Esophagus squamous epithelium (tissue), 5 donors: ENCODE measurements at regions of chr14 and their contacts with region 1.

Region 1: GRCh38 chr14:69460093-69460701 is 24.3 kb upstream of the PLEKHD1 start:
- DNase-seq: no peak
- H3K4me3 ChIP-seq: no peak overlapping the region
- H3K27ac ChIP-seq: no peak overlapping the region
- H3K4me1 ChIP-seq: peaks cover 0 to 5% (median 0%) of the 10 kb centered on the region in 3 donors
- H3K27me3 ChIP-seq: no peaks in the 10 kb centered on the region
- CTCF ChIP-seq: peak; percentile 57 to 89 (median 79)
- POLR2A ChIP-seq: no peak

Region 2: DNA sequence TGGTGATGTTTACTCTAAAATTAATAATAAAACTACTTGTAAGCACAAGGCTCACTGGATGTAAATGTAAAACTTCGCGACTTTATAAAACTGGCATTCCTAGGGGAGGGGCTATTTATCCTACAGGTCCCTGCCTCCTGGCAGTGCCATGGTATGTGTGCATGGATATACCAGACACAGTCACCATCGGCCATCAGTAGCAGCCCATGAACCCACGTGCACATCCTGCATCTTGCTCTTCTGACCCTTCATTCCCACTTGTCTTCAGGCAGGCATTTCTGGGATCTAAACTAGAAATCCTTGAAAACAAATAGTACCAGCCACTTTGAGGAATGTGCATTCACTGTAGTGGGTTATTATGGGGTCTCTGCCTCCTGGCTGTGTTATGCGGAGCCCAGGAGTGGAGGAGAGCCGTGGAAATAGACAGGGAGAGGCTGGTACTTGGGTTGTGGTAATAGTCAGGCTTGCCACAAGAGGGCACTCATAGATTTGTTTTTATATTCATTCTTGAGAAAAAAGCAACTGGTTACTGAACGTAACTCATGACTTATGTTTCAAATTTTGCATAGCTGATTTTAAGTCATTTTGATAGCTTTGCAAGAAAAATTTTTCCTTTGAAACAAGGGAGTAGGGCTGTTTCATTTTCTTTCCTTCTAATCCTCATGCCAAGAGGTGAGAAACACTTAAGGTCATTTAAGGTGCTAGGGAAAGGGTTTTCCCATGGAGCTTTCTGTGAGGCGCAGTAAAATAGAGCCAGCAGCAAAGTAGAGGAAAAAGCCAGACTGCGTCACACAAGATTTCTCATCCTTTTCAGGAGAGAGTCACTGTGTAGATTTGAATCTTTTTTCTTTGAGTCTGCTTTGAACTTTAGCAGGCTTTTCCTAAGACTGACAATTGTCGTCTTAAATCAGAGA is 217.6 kb before region 1 on chr14:
- intact Hi-C with region 1: loop called (anchors 5 kb)
- DNase-seq: no peak
- H3K4me3 ChIP-seq: no peak overlapping the region
- H3K27ac ChIP-seq: no peak overlapping the region
- H3K4me1 ChIP-seq: peaks cover 0 to 12% (median 0%) of the 10 kb centered on the region in 3 donors
- H3K27me3 ChIP-seq: no peaks in the 10 kb centered on the region
- CTCF ChIP-seq: peak in 5 of 6 experiments; percentile 69 to 79 (median 76)
- POLR2A ChIP-seq: no peak

Region 3: DNA sequence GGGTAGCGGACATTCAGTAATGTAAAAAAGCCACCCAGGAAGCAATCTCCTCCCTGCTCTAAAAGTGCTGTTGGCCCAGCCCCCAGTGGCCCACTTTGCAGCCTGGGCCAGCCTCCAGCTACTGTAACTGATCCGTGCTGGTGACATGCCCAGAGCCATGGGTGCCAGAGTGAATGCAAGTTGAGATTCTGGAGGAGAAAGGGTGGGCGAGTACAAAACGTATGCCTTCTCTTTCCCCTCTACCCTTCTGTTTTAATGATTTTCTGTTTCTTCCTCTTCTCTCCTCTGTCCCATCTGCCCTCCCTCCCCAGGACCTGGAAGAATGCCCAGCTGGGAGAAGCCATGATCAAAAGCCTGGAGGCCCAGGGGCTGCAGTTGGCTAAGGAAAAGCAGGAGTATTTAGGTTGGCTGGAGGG is 41.2 kb after region 1 on chr14:
- intact Hi-C with region 1: no loop called
- DNase-seq: no peak
- H3K4me3 ChIP-seq: no peak overlapping the region
- H3K27ac ChIP-seq: no peak overlapping the region
- H3K4me1 ChIP-seq: peaks cover 0 to 26% (median 0%) of the 10 kb centered on the region in 3 donors
- H3K27me3 ChIP-seq: peaks cover 0 to 9% (median 0%) of the 10 kb centered on the region in 4 donors
- CTCF ChIP-seq: no peak
- POLR2A ChIP-seq: no peak